Activated T-helper 2 cell treated with anti-CD3 and anti-CD28 coated beads, Interferon-gamma antibody, Interleukin-2, Interleukin-4, amounts not matched to agents 10 μg/mL and 5 μg/mL and 100 μg/mL, durations not matched to agents 14 hours and 24 hours and 36 hours (primary cell): ENCODE measurements at regions of chr2 and their contacts with region 1.

Region 1: DNA sequence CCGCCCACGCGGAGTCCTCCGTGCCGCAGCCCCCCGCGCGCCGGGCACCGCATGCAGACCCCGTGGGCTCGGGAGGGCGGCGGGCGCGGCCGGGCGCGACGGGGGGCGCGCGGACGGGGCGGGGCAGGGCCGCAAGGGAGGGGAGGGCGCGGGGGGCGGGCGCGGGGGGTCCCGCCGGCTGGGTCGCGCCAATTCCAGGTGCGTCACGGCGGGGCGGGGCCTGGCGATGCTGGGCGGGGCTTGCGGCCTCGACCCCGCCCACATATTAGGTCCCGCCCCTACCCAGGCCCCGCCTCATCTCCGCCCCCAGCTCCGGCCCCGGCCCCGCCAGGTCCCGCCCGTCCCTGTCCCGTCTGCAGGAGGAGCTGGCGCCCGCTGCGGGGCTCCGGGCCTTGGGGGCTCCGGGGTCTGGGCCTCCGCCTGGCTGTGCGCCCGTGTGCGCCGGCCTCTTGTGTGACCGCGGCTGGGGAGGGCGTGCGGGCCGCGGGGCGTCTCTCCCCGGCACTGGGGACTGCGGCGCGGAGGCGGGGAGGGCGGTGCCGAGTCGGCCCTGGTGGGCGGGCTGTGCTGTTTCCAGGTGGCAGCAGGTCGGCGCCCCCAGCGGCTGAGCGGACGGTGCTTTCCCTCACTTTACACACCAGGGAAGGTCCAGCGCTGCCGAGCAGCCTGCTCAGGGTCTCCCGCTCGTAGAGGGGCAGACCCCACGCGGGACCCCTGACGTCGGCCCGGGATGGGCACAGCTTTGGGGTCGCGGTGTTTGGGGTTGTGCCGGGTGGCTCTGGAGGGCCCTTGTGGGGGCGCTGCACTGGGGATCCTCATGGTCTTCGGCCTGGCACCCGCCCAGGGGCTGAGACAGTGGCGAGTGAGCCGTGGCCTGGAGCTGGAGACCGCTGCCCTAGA is 543 bp downstream of the ING5 start:
- DNase-seq: peak; percentile 81
- H3K4me3 Mint-ChIP-seq: peak overlapping the region; percentile 81
- H3K27ac Mint-ChIP-seq: peak overlapping the region; percentile 59
- H3K4me1 Mint-ChIP-seq: peaks cover 13% of the 10 kb centered on the region
- H3K27me3 Mint-ChIP-seq: no peaks in the 10 kb centered on the region

Region 2: GRCh38 chr2:241425368-241425767 is 277.0 kb before region 1 on chr2:
- intact Hi-C with region 1: no loop called
- DNase-seq: no peak
- H3K4me3 Mint-ChIP-seq: no peak overlapping the region
- H3K27ac Mint-ChIP-seq: no peak overlapping the region
- H3K4me1 Mint-ChIP-seq: no peaks in the 10 kb centered on the region
- H3K27me3 Mint-ChIP-seq: no peaks in the 10 kb centered on the region

Region 3: DNA sequence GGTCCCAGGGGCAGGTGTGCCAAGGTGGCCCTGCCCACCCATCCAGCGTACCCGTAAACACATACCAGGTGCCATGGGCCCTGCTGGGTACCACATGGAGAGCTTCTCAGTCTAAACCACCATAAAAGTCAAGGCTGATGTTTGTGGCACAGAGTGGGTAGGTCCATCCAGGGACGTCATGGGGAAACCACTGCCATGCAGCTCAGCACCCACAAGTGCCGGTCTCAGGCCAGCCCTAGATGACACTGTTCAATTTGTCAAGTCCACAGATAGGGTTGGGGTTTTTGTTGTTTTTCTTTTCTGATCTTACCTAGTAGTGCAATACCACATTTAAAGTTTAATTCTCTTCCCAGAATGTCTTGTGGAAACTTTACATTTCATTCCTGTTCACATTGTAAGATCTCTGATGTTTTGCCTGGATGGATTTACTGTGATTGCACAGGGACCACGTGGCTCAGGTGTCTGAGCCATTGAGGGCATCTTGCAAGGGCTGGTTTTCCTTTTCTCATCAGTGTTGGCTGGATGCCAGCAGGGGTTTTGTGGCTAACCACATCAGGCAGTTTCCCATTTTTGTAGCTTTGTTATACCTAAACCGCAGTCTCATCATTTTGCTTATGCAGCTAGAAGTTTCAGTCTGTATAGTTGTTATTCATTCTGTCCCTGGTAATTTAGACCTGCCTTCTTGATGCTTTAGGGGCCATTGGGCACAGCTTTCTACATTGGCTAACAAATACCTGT is 258.7 kb before region 1 on chr2:
- intact Hi-C with region 1: no loop called
- DNase-seq: peak; percentile 89
- H3K4me3 Mint-ChIP-seq: peak overlapping the region; percentile 19
- H3K27ac Mint-ChIP-seq: peak overlapping the region; percentile 71
- H3K4me1 Mint-ChIP-seq: peaks cover 24% of the 10 kb centered on the region
- H3K27me3 Mint-ChIP-seq: peaks cover 23% of the 10 kb centered on the region

Region 4: GRCh38 chr2:241880311-241881073 is 178.1 kb after region 1 on chr2:
- intact Hi-C with region 1: loop called (anchors 1 kb)
- DNase-seq: no peak
- H3K4me3 Mint-ChIP-seq: peak overlapping the region; percentile 89
- H3K27ac Mint-ChIP-seq: peak overlapping the region; percentile 90
- H3K4me1 Mint-ChIP-seq: peaks cover 18% of the 10 kb centered on the region
- H3K27me3 Mint-ChIP-seq: no peaks in the 10 kb centered on the region